Body of pancreas (tissue), 4 donors: ENCODE measurements at regions of chr18 and their contacts with region 1.

Region 1: GRCh38 chr18:35592298-35592697 is 10.8 kb downstream of the GALNT1 start:
- DNase-seq: no peak
- ATAC-seq: no peak
- H3K4me3 ChIP-seq: no peak overlapping the region
- H3K27ac ChIP-seq: no peak overlapping the region
- H3K4me1 ChIP-seq: no peaks in the 10 kb centered on the region
- H3K27me3 ChIP-seq: no peaks in the 10 kb centered on the region
- CTCF ChIP-seq: no peak
- POLR2A ChIP-seq: no peak

Region 2: DNA sequence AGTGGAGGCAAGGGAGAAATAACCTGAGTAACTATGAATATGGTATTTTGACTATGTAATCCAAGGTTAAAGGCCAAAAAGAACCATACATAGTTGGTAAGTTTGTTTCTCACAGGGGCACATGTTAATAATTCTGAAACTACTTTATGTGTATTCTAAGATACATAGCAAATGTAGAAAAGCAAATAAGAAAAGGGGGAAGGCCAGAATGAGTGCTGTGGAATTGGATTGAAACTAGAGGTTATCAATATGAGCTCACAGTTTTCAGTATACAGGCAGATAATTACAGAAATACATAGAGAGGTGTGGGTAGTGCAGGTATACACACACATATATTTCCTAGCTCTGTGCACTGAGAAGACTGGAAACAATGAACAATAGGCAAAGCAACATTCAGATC is 108.3 kb before region 1 on chr18:
- intact Hi-C with region 1: loop called (anchors 10 kb)
- DNase-seq: no peak
- ATAC-seq: no peak
- H3K4me3 ChIP-seq: no peak overlapping the region
- H3K27ac ChIP-seq: no peak overlapping the region
- H3K4me1 ChIP-seq: peaks cover 12% of the 10 kb centered on the region
- H3K27me3 ChIP-seq: no peaks in the 10 kb centered on the region
- CTCF ChIP-seq: no peak
- POLR2A ChIP-seq: no peak

Region 3: GRCh38 chr18:35642802-35643201 is 50.5 kb after region 1 on chr18:
- intact Hi-C with region 1: no loop called
- DNase-seq: no peak
- ATAC-seq: no peak
- H3K4me3 ChIP-seq: no peak overlapping the region
- H3K27ac ChIP-seq: no peak overlapping the region
- H3K4me1 ChIP-seq: no peaks in the 10 kb centered on the region
- H3K27me3 ChIP-seq: no peaks in the 10 kb centered on the region
- CTCF ChIP-seq: no peak
- POLR2A ChIP-seq: no peak